Panc1 (cell line): ENCODE measurements at regions of chr2 and their contacts with region 1.

Region 1: GRCh38 chr2:237685408-237685807 is 58.0 kb downstream of the LRRFIP1 start:
- DNase-seq: no peak
- ATAC-seq: peak; percentile 86
- H3K4me3 ChIP-seq: no peak overlapping the region
- H3K27ac ChIP-seq: no peak overlapping the region
- H3K4me1 ChIP-seq: peaks cover 5% of the 10 kb centered on the region; the same call in 1 of the 2 replicates
- H3K27me3 ChIP-seq: no peaks in the 10 kb centered on the region
- CTCF ChIP-seq: peak; percentile 72

Region 2: DNA sequence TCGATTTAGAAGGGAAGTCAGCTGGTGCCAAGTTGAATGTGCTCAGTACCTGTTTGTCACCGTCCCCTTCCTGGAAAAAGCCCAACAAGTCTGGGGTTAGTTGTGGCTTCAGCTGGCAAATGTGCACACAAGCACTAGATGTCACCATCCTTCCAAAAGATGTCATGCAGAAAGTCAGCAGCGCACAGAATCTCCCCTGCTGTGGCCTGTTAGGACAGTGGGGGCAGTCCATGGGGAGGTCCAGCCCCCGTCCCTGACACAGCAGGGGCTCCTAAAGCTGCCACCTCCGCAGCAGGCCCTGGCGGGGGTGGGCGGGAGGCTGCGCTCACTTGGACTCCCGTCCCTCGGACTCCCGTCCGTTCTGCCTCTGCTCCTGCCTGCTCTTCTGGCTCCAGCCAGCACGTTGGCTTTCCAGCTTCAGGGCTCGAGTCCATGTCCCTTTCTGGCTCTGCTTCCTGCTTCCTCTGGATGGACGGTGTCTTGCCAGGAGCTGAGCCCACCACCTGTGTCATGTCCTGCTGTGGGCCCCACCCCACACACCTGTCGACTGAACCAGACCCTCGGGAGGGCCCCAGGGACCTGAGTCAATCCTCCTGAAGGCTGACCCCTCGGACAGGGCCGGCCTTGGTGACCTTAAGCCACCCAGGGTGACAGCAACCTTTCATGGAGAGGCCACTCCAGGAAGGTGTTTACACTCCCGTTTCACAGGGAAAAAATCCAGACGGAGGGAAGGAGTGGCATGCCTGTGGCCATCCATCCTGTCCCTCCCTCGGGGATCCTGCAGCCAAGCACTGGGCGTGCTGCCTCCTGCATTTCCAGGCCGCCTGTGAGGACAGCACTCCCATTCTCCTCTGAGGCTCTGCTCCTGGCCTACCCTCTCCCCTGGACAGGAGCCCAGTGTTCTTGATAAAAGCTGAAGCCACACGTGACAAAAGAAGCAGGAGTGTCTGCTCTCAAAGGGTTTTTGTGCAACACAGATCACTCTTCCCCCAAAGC is 103.4 kb before region 1 on chr2:
- CTCF ChIA-PET with region 1: interaction called, 12 read pairs
- POLR2A ChIA-PET with region 1: no interaction called
- in situ Hi-C with region 1: no loop called
- intact Hi-C with region 1: no loop called
- DNase-seq: no peak
- ATAC-seq: peak; percentile 86
- H3K4me3 ChIP-seq: peak overlapping the region in 1 of 2 experiments; percentile 20; a peak in 2 of 4 replicates
- H3K27ac ChIP-seq: peak overlapping the region; percentile 48; the same call in 1 of the 2 replicates
- H3K4me1 ChIP-seq: peaks cover 10% of the 10 kb centered on the region
- H3K27me3 ChIP-seq: no peaks in the 10 kb centered on the region
- CTCF ChIP-seq: peak; percentile 74

Region 3: GRCh38 chr2:237674731-237675276 is 10.6 kb before region 1 on chr2:
- CTCF ChIA-PET with region 1: interaction called, 16 read pairs
- POLR2A ChIA-PET with region 1: interaction called, 9 read pairs
- in situ Hi-C with region 1: no loop called
- intact Hi-C with region 1: no loop called
- DNase-seq: no peak
- ATAC-seq: peak; percentile 88
- H3K4me3 ChIP-seq: peak overlapping the region; percentile 22 to 44
- H3K27ac ChIP-seq: peak overlapping the region; percentile 72
- H3K4me1 ChIP-seq: peaks cover 29% of the 10 kb centered on the region
- H3K27me3 ChIP-seq: no peaks in the 10 kb centered on the region
- CTCF ChIP-seq: no peak